Naive thymus-derived CD4-positive, alpha-beta T cell (primary cell): ENCODE measurements at regions of chr5 and their contacts with region 1.

Region 1: GRCh38 chr5:157670662-157671591 is at the start of gene C5orf52:
- DNase-seq: peak in 1 of 9 donors; percentile 52
- ATAC-seq: peak; percentile 41
- H3K4me3 ChIP-seq: peak within 1 kb of the TSS; percentile 38
- H3K4me3 Mint-ChIP-seq: peak within 1 kb of the TSS; percentile 69 to 95 (median 82)
- H3K27ac ChIP-seq: no peak within 1 kb of the TSS
- H3K27ac Mint-ChIP-seq: peak within 1 kb of the TSS in 4 of 9 donors; percentile 4 to 85 (median 22)
- H3K4me1 ChIP-seq: peaks cover 0 to 8% of the 10 kb centered on the region in 2 donors
- H3K4me1 Mint-ChIP-seq: peaks cover 16 to 31% (median 25%) of the 10 kb centered on the region in 7 donors
- H3K27me3 ChIP-seq: peaks cover 0 to 15% of the 10 kb centered on the region in 2 donors
- H3K27me3 Mint-ChIP-seq: peaks cover 25 to 49% (median 44%) of the 10 kb centered on the region in 5 donors
- total RNA-seq, gene C5orf52: not detected

Region 2: DNA sequence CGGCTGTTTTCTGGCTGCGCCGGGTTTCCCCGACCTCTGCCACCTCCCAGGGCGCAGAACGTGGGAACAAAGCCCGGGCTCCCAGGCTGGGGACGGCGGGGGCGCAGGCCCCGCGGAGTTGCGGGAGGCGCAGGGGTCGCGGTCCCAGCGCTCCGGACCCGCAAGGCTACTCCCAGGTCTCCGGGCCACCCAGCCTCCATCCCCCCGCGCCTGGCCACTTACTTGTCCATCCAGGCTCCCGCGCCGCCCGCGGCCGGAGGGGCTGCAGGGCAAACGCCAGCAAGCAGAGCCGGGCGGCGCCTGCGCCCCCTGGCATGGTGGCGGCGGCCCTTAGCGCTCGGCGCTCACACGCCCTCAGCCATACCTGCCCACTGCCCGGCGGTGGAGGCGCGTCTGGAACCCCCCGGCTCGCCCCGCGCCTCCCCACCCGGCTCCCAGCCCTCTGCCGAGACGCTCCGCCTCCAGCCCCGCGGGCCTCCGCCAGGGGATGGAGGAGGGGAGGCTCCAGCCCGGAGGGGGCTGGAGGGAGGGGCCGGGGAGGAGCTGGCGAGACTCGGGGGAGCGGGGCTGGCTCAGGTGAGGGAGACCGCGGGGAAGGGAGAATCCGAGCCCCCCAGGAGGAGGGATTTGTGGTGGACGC is 95.4 kb before region 1 on chr5 and contains the start of gene ADAM19:
- CTCF ChIA-PET with region 1: no interaction called
- POLR2A ChIA-PET with region 1: no interaction called
- intact Hi-C with region 1: loop called in 1 of 2 experiments (anchors 2 kb)
- DNase-seq: peak in 4 of 9 donors; percentile 15 to 72 (median 24)
- ATAC-seq: peak; percentile 68
- H3K4me3 ChIP-seq: peak within 1 kb of the TSS; percentile 45
- H3K4me3 Mint-ChIP-seq: peak within 1 kb of the TSS; percentile 85 to 99 (median 94)
- H3K27ac ChIP-seq: no peak within 1 kb of the TSS
- H3K27ac Mint-ChIP-seq: peak within 1 kb of the TSS in 5 of 9 donors; percentile 2 to 92 (median 65)
- H3K4me1 ChIP-seq: peaks cover 11% of the 10 kb centered on the region in 2 donors
- H3K4me1 Mint-ChIP-seq: peaks cover 16 to 73% (median 24%) of the 10 kb centered on the region in 7 donors
- H3K27me3 ChIP-seq: no peaks in the 10 kb centered on the region
- H3K27me3 Mint-ChIP-seq: peaks cover 0 to 14% (median 11%) of the 10 kb centered on the region in 5 donors
- total RNA-seq, gene ADAM19: 0.81 to 410 (median 7.3) TPM